Calu3 (cell line): ENCODE measurements at regions of chr6 and their contacts with region 1.

Region 1: DNA sequence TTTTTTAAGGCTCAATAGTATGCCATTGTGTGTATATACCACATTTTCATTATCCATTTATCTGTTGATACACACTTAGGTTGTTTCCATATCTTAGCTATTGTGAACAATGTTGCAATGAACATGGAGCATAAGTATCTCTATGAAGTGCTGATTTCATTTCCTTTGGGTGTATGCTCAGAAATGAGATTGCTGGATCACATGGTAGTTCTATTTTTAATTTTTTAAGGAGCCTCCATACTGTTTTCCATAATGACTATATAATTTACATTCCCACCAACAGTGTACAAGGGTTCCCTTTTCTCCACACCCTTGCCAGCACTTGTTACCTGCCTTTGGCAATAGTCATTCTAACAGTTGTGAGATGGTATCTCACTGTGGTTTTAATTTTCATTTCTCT is 15.1 kb upstream of the HLA-DOA start:
- DNase-seq: no peak
- H3K4me3 Mint-ChIP-seq: no peak overlapping the region
- H3K27ac Mint-ChIP-seq: no peak overlapping the region
- H3K4me1 Mint-ChIP-seq: peaks cover 16% of the 10 kb centered on the region
- H3K27me3 Mint-ChIP-seq: peaks cover 41% of the 10 kb centered on the region
- CTCF ChIP-seq: no peak

Region 2: DNA sequence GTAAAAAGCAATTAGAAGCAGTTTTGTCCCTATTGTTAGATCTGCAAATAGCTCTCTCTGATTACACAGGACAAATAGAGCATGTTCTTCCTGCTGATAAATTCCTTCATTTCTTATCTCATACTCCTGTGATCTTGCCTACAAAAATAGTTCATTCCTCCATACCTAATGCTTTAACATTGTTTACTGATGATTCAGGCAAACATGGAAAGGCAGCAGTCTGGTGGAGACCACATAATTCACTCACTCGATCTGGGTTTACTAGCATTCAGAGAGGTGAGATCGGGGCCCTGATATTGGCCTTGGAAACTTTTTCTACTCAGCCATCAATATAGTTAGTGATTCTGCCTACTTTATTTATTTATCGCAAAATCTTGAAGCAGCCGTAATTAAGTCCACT is 28.7 kb after region 1 on chr6:
- CTCF ChIA-PET with region 1: interaction called, 4 read pairs
- intact Hi-C with region 1: loop called (anchors 2 kb)
- DNase-seq: no peak
- H3K4me3 Mint-ChIP-seq: peak overlapping the region; percentile 34
- H3K27ac Mint-ChIP-seq: peak overlapping the region; percentile 43
- H3K4me1 Mint-ChIP-seq: peaks cover 26% of the 10 kb centered on the region
- H3K27me3 Mint-ChIP-seq: peaks cover 78% of the 10 kb centered on the region
- CTCF ChIP-seq: no peak

Region 3: DNA sequence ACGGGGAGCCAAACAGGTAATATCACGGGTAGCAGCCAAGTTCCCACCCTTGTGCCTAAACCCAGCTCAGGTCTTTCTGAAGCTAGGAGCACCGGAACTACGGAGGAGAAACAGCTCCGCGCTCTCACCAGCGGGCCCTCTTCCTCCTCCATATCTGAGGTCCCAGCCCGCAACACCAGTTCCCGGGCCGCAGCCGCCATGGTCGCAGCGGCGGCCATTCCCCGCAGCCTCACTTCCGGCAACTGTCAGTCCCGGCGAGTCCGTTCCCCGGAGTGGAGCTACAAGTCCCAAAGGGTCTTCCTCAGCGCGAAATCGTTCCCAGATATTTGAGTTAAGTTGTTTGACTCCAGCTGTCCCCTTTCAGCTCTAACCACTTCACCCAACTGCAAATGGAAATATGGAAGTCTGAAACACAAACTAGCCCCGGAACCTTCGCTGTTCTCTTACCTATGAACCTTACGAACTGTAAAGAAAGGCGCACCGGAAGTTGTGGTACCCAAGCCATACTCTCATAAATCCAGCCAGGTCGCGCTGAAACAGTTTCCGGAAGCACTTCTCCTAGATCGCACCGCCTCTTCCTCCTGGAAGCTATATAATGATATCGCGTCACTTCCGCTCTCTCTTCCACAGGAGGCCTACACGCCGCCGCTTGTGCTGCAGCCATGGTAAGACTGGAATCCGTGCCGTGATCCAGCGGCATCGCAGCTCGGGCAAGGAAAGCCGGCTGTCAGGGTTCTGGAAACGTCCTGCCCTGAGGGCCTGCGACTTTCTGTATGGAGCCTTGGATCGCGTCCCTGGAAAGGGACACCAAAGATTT is 247.1 kb after region 1 on chr6 and contains the starts of genes RPS18 and VPS52:
- CTCF ChIA-PET with region 1: no interaction called
- intact Hi-C with region 1: no loop called
- DNase-seq: peak; percentile 96
- H3K4me3 Mint-ChIP-seq: peak within 1 kb of the TSS; percentile 94
- H3K27ac Mint-ChIP-seq: peak within 1 kb of the TSS; percentile 100
- H3K4me1 Mint-ChIP-seq: peaks cover 65% of the 10 kb centered on the region
- H3K27me3 Mint-ChIP-seq: peaks cover 13% of the 10 kb centered on the region
- CTCF ChIP-seq: no peak
- total RNA-seq, gene RPS18: 2,667 and 2,688 TPM in 2 replicates
- total RNA-seq, gene VPS52: 99.7 and 104 TPM in 2 replicates